ENCODE measurements at regions of chr7 and their contacts with region 1.

Region 1: GRCh38 chr7:149261829-149262617 is at the start of gene ZNF783:
- DNase-seq: peak; percentile 85 to 94 (median 87)
- H3K4me3 ChIP-seq: peak within 1 kb of the TSS; percentile 63
- H3K27ac ChIP-seq: peak within 1 kb of the TSS; percentile 46 to 92
- H3K4me1 ChIP-seq: no peaks in the 10 kb centered on the region
- H3K27me3 ChIP-seq: no peaks in the 10 kb centered on the region
- CTCF ChIP-seq: peak; percentile 59 to 97 (median 93)
- EP300 ChIP-seq: no peak
- POLR2A ChIP-seq: peak; percentile 28
- total RNA-seq, gene ZNF783: 11.6 to 27.6 (median 21.2) TPM

Region 2: GRCh38 chr7:149422129-149422913 is 160.3 kb after region 1 on chr7:
- intact Hi-C with region 1: loop called in 1 of 4 experiments (anchors 10 kb)
- DNase-seq: peak; percentile 44 to 71 (median 49)
- H3K4me3 ChIP-seq: peak overlapping the region; percentile 35
- H3K27ac ChIP-seq: peak overlapping the region in 1 of 2 donors; percentile 42
- H3K4me1 ChIP-seq: peaks cover 3% of the 10 kb centered on the region
- H3K27me3 ChIP-seq: no peaks in the 10 kb centered on the region
- CTCF ChIP-seq: peak in 2 of 3 donors; percentile 43 to 73
- EP300 ChIP-seq: no peak
- POLR2A ChIP-seq: no peak